ENCODE measurements at regions of chr9 and their contacts with region 1.

Region 1: GRCh38 chr9:114759512-114760341 is 46.1 kb downstream of the TNFSF15 start:
- DNase-seq: no peak
- ATAC-seq: no peak
- H3K4me3 Mint-ChIP-seq: no peak overlapping the region
- H3K27ac Mint-ChIP-seq: no peak overlapping the region
- H3K4me1 Mint-ChIP-seq: peaks cover under 1% of the 10 kb centered on the region
- H3K27me3 Mint-ChIP-seq: no peaks in the 10 kb centered on the region

Region 2: DNA sequence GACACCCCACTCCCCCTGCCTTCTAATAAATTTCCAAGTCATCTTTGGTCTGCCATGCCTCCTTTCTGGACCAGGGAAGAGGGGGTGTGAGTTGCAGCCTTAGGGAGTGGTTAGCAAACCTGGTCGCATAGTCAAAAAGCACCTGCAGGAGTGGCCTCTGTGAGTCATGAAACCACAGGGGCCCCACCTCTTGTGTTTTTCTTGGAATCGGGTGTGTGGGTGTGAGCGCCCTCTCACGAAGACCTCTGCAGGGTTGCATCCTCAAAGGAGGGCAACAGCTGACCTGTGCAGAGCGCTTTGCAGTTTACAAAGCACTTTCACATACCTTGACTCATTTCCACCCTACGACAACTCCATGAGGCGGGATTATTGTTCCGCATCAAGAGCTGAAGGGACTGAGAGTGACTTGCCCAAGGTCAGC is 40.9 kb before region 1 on chr9:
- CTCF ChIA-PET with region 1: no interaction called
- POLR2A ChIA-PET with region 1: no interaction called
- intact Hi-C with region 1: no loop called
- DNase-seq: peak; percentile 95
- ATAC-seq: peak; percentile 94
- H3K4me3 Mint-ChIP-seq: peak overlapping the region; percentile 15
- H3K27ac Mint-ChIP-seq: peak overlapping the region; percentile 96
- H3K4me1 Mint-ChIP-seq: peaks cover 56% of the 10 kb centered on the region
- H3K27me3 Mint-ChIP-seq: peaks cover 2% of the 10 kb centered on the region

Region 3: GRCh38 chr9:114805670-114806525 is 46.2 kb after region 1 on chr9 and contains the start of gene TNFSF15:
- CTCF ChIA-PET with region 1: no interaction called
- POLR2A ChIA-PET with region 1: no interaction called
- intact Hi-C with region 1: loop called in 1 of 2 experiments (anchors 5 kb)
- DNase-seq: peak; percentile 64
- ATAC-seq: peak; percentile 85
- H3K4me3 Mint-ChIP-seq: peak within 1 kb of the TSS; percentile 43
- H3K27ac Mint-ChIP-seq: peak within 1 kb of the TSS; percentile 68
- H3K4me1 Mint-ChIP-seq: peaks cover 25% of the 10 kb centered on the region
- H3K27me3 Mint-ChIP-seq: peaks cover 3% of the 10 kb centered on the region
- total RNA-seq, gene TNFSF15: 0.47 to 0.50 TPM